ENCODE measurements at regions of chr1 and their contacts with region 1.

Region 1: GRCh38 chr1:235415008-235415904 is 48.0 kb downstream of the TBCE start:
- DNase-seq: peak in 8 of 9 donors; percentile 24 to 61 (median 46)
- ATAC-seq: peak; percentile 87
- H3K4me3 ChIP-seq: no peak overlapping the region
- H3K4me3 Mint-ChIP-seq: no peak overlapping the region
- H3K27ac ChIP-seq: no peak overlapping the region
- H3K27ac Mint-ChIP-seq: no peak overlapping the region
- H3K4me1 ChIP-seq: no peaks in the 10 kb centered on the region
- H3K4me1 Mint-ChIP-seq: peaks cover 0 to 15% (median 6%) of the 10 kb centered on the region in 7 donors
- H3K27me3 ChIP-seq: no peaks in the 10 kb centered on the region
- H3K27me3 Mint-ChIP-seq: no peaks in the 10 kb centered on the region

Region 2: DNA sequence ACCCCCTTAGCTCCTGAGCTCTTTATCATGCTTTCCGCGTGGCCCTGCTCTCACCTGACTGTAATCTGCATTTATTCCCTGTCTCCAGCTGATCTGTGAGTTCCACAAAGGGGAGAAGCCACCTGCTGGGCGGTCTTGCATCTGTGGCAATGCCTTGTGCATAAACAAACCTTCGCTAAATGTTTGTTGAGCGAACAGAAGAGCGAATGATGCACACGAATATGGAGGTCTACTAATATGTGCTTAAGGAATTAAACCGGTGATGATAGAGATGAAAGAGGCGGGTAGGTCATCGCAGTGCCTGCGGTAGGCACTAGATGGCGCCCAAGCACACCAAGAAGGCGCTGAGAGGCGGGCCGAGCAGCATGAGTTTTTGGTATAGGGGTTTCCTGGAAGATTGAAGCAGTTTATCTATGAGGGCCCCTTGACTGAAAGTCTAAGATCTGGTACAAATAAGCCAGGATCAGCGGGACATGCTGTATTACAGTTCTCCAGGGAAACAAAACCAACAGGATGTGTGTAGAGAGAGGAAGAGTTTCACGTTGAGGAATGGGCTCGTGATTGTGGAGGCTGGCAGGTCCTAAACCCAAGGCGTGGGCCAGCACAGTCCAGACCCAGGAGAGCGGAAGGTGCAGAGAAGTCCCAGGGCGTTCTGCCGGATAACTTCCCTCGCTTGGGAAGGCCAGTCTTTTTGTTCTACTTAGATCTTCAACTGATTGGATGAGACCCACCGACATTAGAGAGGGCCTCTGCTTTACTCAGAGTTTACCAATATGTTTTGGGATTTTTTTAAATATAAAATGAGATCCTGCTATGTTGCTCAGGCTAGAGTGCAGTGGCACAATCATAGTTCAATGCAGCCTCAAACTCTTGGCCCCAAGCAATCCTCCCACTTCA is 321.3 kb before region 1 on chr1:
- CTCF ChIA-PET with region 1: interaction called, 9 read pairs
- POLR2A ChIA-PET with region 1: no interaction called
- intact Hi-C with region 1: loop called (anchors 1 kb)
- DNase-seq: peak; percentile 67 to 89 (median 80)
- ATAC-seq: peak; percentile 97
- H3K4me3 ChIP-seq: no peak overlapping the region
- H3K4me3 Mint-ChIP-seq: peak overlapping the region in 1 of 10 donors; percentile 41
- H3K27ac ChIP-seq: no peak overlapping the region
- H3K27ac Mint-ChIP-seq: peak overlapping the region in 3 of 9 donors; percentile 49 to 88 (median 50)
- H3K4me1 ChIP-seq: peaks cover 0 to 3% of the 10 kb centered on the region in 2 donors
- H3K4me1 Mint-ChIP-seq: peaks cover 6 to 14% (median 7%) of the 10 kb centered on the region in 7 donors
- H3K27me3 ChIP-seq: no peaks in the 10 kb centered on the region
- H3K27me3 Mint-ChIP-seq: peaks cover 0 to 6% (median 0%) of the 10 kb centered on the region in 5 donors

Region 3: DNA sequence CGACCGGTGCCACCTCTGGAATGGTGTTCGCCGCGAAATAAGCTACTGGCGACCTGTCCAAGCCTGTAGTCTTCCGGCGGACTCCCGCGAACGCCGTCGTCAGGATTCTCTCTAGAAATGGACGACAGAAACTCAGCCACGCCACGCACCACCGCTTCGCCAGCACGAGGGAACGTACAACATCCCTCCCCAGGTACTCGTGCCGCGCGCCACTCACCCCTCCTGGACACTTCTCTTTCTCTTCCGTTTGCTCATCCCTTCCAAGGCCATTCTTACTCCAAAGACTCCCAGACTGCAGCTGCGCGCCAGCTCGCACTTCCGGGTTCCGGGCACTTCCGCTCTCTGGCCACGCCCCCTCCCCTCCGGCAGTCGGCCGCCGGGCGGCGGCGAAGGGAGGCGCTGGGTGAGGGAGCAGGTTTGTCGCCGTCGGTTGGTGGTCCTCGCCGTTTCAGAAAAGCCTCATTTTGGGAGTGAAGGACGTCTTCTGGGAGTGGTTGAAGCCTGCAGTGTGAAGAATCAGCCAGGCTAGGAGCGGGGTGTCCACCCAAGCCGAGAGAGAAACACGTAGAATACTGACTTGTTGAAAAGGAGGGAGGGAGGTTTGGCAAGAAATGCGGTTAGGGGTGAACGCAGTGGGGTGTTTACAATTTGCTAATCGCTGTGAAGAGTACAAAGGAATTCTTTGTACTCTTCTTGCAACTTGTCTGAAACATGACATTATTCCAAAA is 254.1 kb before region 1 on chr1 and contains the start of gene RBM34:
- CTCF ChIA-PET with region 1: interaction called, 4 read pairs
- POLR2A ChIA-PET with region 1: interaction called, 3 read pairs
- intact Hi-C with region 1: loop called (anchors 1 to 2 kb)
- DNase-seq: peak; percentile 87 to 95 (median 91)
- ATAC-seq: peak; percentile 96
- H3K4me3 ChIP-seq: peak within 1 kb of the TSS; percentile 92
- H3K4me3 Mint-ChIP-seq: peak within 1 kb of the TSS in 8 of 10 donors; percentile 96 to 100 (median 98)
- H3K27ac ChIP-seq: peak within 1 kb of the TSS; percentile 86
- H3K27ac Mint-ChIP-seq: peak within 1 kb of the TSS; percentile 97 to 100 (median 99)
- H3K4me1 ChIP-seq: peaks cover 30 to 33% of the 10 kb centered on the region in 2 donors
- H3K4me1 Mint-ChIP-seq: peaks cover 8 to 30% (median 17%) of the 10 kb centered on the region in 7 donors
- H3K27me3 ChIP-seq: no peaks in the 10 kb centered on the region
- H3K27me3 Mint-ChIP-seq: no peaks in the 10 kb centered on the region
- total RNA-seq, gene RBM34: 105 to 171 (median 137) TPM

Region 4: GRCh38 chr1:235246022-235246991 is 168.9 kb before region 1 on chr1:
- CTCF ChIA-PET with region 1: interaction called, 34 read pairs
- POLR2A ChIA-PET with region 1: no interaction called
- intact Hi-C with region 1: no loop called
- DNase-seq: no peak
- ATAC-seq: no peak
- H3K4me3 ChIP-seq: no peak overlapping the region
- H3K4me3 Mint-ChIP-seq: peak overlapping the region in 6 of 10 donors; percentile 14 to 47 (median 33)
- H3K27ac ChIP-seq: peak overlapping the region; percentile 39
- H3K27ac Mint-ChIP-seq: peak overlapping the region in 7 of 9 donors; percentile 5 to 79 (median 52)
- H3K4me1 ChIP-seq: peaks cover 13 to 18% of the 10 kb centered on the region in 2 donors
- H3K4me1 Mint-ChIP-seq: peaks cover 17 to 57% (median 48%) of the 10 kb centered on the region in 7 donors
- H3K27me3 ChIP-seq: no peaks in the 10 kb centered on the region
- H3K27me3 Mint-ChIP-seq: no peaks in the 10 kb centered on the region

Region 5: DNA sequence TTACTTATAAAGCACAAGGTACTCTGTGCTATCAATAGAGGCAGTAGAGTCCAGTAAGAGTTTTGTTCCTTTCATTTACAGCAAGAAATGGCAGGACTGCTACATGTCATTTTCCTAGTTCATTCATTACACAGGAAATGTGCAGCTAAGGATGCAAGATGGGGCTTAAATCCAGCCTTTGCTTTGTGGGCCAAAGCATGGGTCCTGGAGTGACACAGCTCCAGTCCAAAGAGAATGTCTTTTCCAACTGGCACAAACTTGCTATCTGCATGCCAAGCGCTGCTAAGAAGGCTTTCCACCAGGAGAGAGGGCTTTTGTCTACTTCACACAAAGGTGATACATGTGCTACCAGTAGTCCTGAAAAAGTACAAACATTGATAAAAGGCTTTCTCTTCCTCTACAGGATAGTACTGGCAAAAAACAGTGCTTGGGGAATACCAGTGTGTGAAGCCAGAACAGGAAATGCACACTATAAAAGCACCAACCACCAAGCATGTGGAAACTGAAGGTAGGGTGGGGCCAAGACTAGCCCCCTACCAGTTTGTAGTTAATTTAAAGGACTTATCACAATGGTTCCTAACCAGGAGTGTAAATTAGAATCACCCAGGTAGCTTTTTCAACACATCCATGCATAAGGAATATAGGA is 156.0 kb before region 1 on chr1:
- CTCF ChIA-PET with region 1: interaction called, 20 read pairs
- POLR2A ChIA-PET with region 1: no interaction called
- intact Hi-C with region 1: no loop called
- DNase-seq: peak in 2 of 9 donors; percentile 10 to 16
- ATAC-seq: peak; percentile 65
- H3K4me3 ChIP-seq: no peak overlapping the region
- H3K4me3 Mint-ChIP-seq: peak overlapping the region in 7 of 10 donors; percentile 33 to 55 (median 48)
- H3K27ac ChIP-seq: peak overlapping the region; percentile 45
- H3K27ac Mint-ChIP-seq: peak overlapping the region; percentile 41 to 86 (median 71)
- H3K4me1 ChIP-seq: peaks cover 30% of the 10 kb centered on the region in 2 donors
- H3K4me1 Mint-ChIP-seq: peaks cover 40 to 87% (median 71%) of the 10 kb centered on the region in 7 donors
- H3K27me3 ChIP-seq: no peaks in the 10 kb centered on the region
- H3K27me3 Mint-ChIP-seq: no peaks in the 10 kb centered on the region

Region 6: DNA sequence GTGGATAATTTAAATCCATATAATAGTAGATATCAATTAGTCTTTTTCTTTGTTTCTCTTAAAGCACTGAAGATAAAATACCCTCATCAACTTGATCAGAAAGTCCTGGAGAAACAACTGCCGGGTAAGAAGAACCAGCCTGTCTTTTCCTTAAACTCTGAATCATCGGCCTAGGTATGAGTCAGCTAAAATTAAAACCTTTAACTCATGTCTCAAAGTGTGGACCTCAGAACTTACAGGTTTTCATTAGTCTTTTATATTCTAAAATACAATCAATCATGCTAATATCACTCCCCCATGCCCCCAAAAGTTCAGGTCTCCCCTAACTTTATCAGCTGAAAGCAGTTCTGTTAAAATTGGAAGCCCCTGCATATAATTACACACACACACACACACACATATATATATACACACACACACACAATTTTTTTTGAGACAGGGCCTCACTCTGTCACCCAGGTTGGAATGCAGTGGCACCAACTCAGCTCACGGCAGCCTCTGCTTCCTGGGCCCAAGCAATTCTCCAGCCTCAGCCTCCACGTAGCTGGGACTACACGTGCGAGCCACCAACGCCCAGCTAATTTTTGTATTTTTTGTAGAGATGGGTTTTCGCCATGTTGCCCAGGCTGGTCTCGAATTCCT is 27.7 kb after region 1 on chr1:
- CTCF ChIA-PET with region 1: interaction called, 10 read pairs
- POLR2A ChIA-PET with region 1: no interaction called
- intact Hi-C with region 1: no loop called
- DNase-seq: no peak
- ATAC-seq: no peak
- H3K4me3 ChIP-seq: no peak overlapping the region
- H3K4me3 Mint-ChIP-seq: no peak overlapping the region
- H3K27ac ChIP-seq: no peak overlapping the region
- H3K27ac Mint-ChIP-seq: no peak overlapping the region
- H3K4me1 ChIP-seq: no peaks in the 10 kb centered on the region
- H3K4me1 Mint-ChIP-seq: no peaks in the 10 kb centered on the region
- H3K27me3 ChIP-seq: no peaks in the 10 kb centered on the region
- H3K27me3 Mint-ChIP-seq: no peaks in the 10 kb centered on the region